Activated CD4-positive, alpha-beta T cell treated with anti-CD3 and anti-CD28 coated beads for 36 hours (primary cell): ENCODE measurements at regions of chr12 and their contacts with region 1.

Region 1: DNA sequence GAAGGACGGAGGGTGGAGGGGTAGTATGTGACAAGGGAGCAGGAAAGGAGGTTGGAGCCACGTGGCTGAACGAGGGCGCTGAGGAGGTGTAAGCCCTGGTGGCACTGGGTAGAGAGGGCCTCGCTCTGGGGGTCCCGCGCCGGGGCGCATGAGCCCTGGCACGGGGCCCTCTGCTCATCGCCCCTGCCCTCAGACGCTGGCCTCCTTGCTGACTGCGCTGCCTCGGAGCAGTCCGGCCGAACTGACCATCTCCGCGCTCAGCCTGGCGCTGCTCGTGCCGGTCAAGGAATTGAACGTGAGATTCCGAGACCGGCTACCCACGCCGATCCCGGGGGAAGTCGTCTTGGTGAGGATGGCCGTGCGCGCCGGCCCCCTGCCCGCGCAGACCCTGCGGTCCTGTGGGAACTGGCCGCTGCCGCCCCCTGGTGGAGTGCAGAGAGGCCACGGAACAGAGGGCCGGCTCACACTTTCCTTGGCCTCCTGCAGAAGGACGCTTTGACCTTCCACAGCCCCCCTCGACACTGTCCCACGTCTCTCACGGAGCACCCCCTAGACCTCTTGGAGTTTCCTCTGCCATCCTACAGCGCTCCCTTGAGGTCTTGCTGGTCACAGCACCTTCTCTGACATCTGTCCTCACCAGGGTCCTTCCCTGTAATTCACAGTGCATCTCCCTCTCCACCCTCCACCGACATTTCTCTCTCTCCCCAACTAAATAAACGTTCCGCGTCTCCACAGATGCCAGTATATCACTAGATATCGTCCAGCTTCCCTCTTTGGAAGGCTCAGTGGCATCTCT is 10.5 kb downstream of the ARHGEF25 start:
- DNase-seq: peak; percentile 79
- ATAC-seq: peak; percentile 80
- H3K4me3 Mint-ChIP-seq: peak overlapping the region; percentile 60
- H3K27ac Mint-ChIP-seq: no peak overlapping the region
- H3K4me1 Mint-ChIP-seq: peaks cover 28% of the 10 kb centered on the region
- H3K27me3 Mint-ChIP-seq: peaks cover 84% of the 10 kb centered on the region

Region 2: GRCh38 chr12:57611108-57611809 is 10.4 kb before region 1 on chr12 and contains the start of gene ARHGEF25:
- CTCF ChIA-PET with region 1: interaction called, 9 read pairs
- POLR2A ChIA-PET with region 1: no interaction called
- intact Hi-C with region 1: loop called in 1 of 2 experiments (anchors 1 kb)
- DNase-seq: peak; percentile 74
- ATAC-seq: peak; percentile 77
- H3K4me3 Mint-ChIP-seq: peak within 1 kb of the TSS; percentile 55
- H3K27ac Mint-ChIP-seq: no peak within 1 kb of the TSS
- H3K4me1 Mint-ChIP-seq: peaks cover 3% of the 10 kb centered on the region
- H3K27me3 Mint-ChIP-seq: peaks cover 13% of the 10 kb centered on the region
- total RNA-seq, gene ARHGEF25: 2.2 to 2.6 TPM

Region 3: DNA sequence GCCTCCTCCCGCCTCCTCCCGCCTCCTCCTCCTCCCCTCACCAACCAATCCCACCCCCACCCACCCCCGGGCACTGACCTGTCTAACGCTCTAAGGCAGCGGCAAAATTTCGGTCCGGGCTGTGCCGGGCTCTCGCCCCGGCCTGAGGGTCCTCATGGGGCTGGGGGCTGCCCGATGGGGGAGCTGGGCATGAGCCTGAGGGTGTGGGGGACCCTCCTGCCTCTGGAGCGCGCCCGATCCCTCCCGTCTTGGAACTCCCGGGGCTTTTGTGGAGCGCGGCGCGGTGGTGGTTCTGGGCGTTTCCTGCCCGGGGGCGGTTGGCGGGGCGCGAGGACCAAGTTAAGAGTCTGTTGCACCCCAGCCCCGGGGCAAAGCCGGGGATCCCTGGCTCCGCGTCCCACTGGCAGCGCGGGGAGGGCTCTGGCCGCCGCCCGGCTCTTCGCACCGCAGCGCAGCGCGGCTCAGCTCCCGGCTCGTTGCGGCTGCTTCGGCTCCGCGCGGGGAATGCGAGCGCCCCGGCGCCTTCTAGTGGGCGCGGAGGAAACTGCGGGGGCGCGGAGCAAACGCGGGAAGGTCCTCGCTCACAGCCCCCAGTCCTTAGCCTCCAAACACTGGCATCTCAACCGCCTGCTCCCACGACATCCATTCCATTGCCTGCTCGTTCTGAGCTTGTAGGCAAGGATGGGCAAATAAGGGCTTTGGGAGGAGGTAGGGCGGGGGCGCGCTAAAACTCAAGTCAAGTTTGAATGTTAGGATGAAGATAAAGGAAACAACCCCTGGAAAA is 11.2 kb after region 1 on chr12 and contains the start of gene B4GALNT1:
- CTCF ChIA-PET with region 1: interaction called, 10 read pairs
- POLR2A ChIA-PET with region 1: no interaction called
- intact Hi-C with region 1: no loop called
- DNase-seq: peak; percentile 81
- ATAC-seq: peak; percentile 86
- H3K4me3 Mint-ChIP-seq: peak within 1 kb of the TSS; percentile 54
- H3K27ac Mint-ChIP-seq: no peak within 1 kb of the TSS
- H3K4me1 Mint-ChIP-seq: peaks cover 7% of the 10 kb centered on the region
- H3K27me3 Mint-ChIP-seq: peaks cover 49% of the 10 kb centered on the region
- total RNA-seq, gene B4GALNT1: 1.4 to 1.5 TPM